ENCODE measurements at regions of chr4 and their contacts with region 1.

Region 1: DNA sequence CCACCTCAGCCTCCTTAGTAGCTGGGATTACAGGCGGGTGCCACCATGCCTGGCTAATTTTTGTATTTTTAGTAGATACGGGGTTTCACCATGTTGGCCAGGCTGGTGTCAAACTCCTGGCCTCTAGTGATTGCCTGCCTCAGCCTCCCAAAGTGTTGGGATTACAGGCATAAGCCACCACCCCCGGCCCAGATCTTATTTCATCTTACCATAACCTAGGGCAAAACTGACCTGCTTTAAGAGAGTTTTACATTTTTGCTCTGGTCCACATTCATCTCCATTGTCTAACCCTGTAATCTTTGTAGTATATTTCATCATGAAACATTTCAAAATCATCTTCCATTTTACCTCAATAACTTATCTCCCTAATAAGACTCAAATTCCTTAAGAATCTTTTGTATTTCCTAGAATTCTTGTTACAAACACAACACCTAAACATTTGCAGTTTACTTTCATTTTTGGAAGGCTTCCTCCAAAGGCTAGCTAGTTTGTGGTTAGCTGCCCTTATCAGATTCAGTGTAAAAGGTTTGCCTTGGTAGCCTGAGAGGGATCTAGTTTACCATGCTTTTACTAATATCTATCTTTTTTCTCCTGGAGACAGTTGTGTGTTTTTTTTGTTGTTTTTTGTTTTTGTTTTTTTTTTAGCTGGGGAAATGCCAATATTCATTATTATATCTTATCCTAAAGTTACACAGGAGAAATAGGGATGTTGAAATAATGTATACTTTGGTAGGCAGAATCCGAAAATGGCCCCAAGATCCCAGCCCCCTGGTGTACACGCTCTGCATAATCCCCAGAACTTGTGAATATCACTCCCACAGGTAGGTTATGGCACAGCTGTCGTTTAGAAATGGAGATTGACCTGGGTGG is 33.0 kb downstream of the SEPTIN11 start:
- DNase-seq: peak; percentile 50 to 62 (median 58)
- ATAC-seq: peak; percentile 87
- H3K4me3 ChIP-seq: no peak overlapping the region
- H3K27ac ChIP-seq: peak overlapping the region; percentile 18
- H3K4me1 ChIP-seq: peaks cover 5 to 25% of the 10 kb centered on the region in 2 experiments; a peak in 4 of 5 replicates
- H3K27me3 ChIP-seq: no peaks in the 10 kb centered on the region
- CTCF ChIP-seq: peak; percentile 49 to 92 (median 58)
- EP300 ChIP-seq: no peak
- POLR2A ChIP-seq: no peak
- RAD21 ChIP-seq: 0 out of 4 replicates have a peak, but pooled peaks of 1 of the 2 experiments have one; percentile 19

Region 2: GRCh38 chr4:76949276-76950051 is 33.1 kb before region 1 on chr4 and contains the start of gene SEPTIN11:
- CTCF ChIA-PET with region 1: interaction called, 4 read pairs
- POLR2A ChIA-PET with region 1: interaction called, 4 read pairs
- in situ Hi-C with region 1: no loop called
- intact Hi-C with region 1: loop called (anchors 1 kb)
- DNase-seq: peak; percentile 90 to 95 (median 94)
- ATAC-seq: peak; percentile 84
- H3K4me3 ChIP-seq: peak within 1 kb of the TSS; percentile 80
- H3K27ac ChIP-seq: peak within 1 kb of the TSS; percentile 82
- H3K4me1 ChIP-seq: peaks cover 36 to 46% of the 10 kb centered on the region in 2 experiments
- H3K27me3 ChIP-seq: no peaks in the 10 kb centered on the region
- CTCF ChIP-seq: no peak
- EP300 ChIP-seq: no peak
- POLR2A ChIP-seq: peak; percentile 86
- RAD21 ChIP-seq: no peak
- polyA plus RNA-seq, gene SEPTIN11: 25.7 to 26.7 TPM

Region 3: DNA sequence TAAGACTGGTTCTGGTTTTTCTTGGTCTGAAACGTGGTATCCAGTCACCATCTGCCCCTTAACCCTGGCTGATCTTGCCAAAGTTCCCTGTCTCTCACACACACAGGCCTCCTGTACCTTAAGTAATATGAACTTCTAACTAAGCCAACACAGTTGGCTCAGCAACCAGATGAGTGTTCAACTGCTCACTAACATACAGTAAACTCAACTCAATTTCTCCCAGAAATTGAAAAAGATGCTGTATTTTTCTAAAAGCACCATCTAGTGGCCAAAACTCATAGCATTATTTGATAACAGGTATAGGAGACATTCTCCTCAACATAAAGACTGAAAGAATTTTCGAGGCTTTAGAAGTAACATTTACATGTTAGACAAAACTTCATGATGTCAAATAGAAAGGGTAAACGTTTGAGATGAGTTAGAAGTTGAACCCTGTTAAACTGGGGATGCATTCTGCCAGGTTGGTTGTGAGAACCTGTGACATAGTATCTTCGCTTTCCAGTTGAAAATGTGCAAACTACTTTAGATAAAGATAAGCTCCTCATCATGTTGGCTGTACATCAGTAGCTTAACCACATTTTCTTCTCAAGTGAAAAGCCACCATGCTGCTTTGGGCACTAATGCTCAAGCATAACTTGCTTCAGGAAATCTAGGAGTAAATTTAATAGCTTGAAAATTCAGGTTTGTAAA is 62.0 kb after region 1 on chr4:
- CTCF ChIA-PET with region 1: no interaction called
- POLR2A ChIA-PET with region 1: no interaction called
- in situ Hi-C with region 1: no loop called
- intact Hi-C with region 1: no loop called
- DNase-seq: peak; percentile 16 to 44 (median 20)
- ATAC-seq: peak; percentile 68
- H3K4me3 ChIP-seq: no peak overlapping the region
- H3K27ac ChIP-seq: no peak overlapping the region
- H3K4me1 ChIP-seq: peaks cover 0 to 8% of the 10 kb centered on the region in 2 experiments; a peak in 2 of 5 replicates
- H3K27me3 ChIP-seq: no peaks in the 10 kb centered on the region
- CTCF ChIP-seq: peak; percentile 32 to 67 (median 63); a peak in 4 of 6 replicates
- EP300 ChIP-seq: no peak
- POLR2A ChIP-seq: no peak
- RAD21 ChIP-seq: peak; percentile 55 to 58

Measured in K562 (cell line).